Naive thymus-derived CD4-positive, alpha-beta T cell (primary cell): ENCODE measurements at regions of chr6 and their contacts with region 1.

Region 1: DNA sequence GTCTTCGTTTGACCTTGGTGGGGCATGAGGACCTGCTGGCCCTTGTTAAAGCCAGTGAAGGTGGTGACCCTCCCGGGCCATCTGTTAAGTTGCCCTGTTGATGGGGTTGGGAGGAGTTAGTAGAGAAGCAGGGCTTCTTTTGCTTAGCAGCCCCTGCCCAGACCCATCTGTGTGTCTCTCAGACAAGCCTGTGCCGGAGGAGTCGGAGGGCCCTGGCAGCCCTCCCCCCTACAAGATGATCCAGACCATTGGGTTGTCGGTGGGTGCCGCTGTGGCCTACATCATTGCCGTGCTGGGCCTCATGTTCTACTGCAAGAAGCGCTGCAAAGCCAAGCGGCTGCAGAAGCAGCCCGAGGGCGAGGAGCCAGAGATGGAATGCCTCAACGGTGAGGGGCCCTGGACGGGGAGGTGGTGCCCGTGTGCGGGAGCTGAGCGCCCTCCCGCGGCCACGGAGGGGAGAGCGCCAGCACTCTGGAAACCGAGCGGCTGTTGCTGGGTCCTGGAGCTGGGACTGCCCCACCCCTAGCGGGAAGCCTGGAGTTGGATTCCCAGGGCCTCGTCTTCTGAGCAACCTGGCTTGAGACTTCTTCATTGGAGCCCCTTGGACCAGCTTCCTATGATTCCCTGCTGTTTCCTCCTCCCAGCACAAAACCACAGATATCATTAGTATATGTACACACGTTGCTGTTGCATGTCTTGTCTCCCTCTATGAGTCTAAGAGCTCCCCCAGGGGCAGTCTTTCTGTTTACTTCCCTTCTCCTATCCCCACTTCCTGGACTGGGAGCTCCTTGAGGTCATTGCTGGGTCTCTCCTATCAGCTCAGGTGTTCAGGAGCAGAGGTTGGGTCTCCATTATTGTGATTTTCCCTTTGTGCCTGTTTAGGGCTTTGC is 27.6 kb upstream of the SRF start:
- DNase-seq: peak; percentile 62 to 85 (median 76)
- ATAC-seq: peak; percentile 95
- H3K4me3 ChIP-seq: peak overlapping the region; percentile 0
- H3K4me3 Mint-ChIP-seq: peak overlapping the region in 8 of 10 donors; percentile 25 to 63 (median 38)
- H3K27ac ChIP-seq: no peak overlapping the region
- H3K27ac Mint-ChIP-seq: peak overlapping the region in 5 of 9 donors; percentile 30 to 86 (median 51)
- H3K4me1 ChIP-seq: peaks cover 11 to 21% of the 10 kb centered on the region in 2 donors
- H3K4me1 Mint-ChIP-seq: peaks cover 5 to 21% (median 16%) of the 10 kb centered on the region in 7 donors
- H3K27me3 ChIP-seq: no peaks in the 10 kb centered on the region
- H3K27me3 Mint-ChIP-seq: no peaks in the 10 kb centered on the region

Region 2: DNA sequence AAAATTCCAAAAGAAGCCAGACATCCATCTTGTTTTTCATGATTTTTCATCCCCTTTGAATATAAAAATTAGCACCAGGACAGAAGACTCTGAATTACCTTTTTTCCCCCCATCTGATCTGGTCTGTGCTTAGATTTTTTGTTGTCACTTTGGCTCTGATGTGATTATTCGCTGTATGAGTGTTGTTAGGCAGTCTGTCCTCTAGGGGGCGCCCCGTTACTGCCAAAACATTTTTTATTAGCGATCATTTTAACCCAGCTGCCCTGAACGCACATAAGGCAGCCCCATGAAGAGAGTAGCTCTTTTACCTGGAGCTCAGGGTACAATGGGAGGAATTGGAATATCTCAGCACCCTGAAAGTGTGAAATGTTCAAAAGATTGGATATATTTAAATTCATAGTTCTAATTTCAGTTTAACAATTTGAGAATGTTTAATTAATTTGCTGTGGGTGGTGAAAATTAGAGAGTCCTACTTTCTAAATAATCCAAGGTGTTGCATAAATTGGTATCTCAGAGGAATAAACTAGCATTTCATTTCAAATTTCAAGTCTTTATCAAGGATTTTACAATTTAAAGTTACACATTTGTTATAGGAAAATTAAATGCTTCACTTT is 481.8 kb before region 1 on chr6:
- CTCF ChIA-PET with region 1: interaction called, 5 read pairs
- POLR2A ChIA-PET with region 1: interaction called, 3 read pairs
- intact Hi-C with region 1: loop called in 1 of 2 experiments (anchors 2 kb)
- DNase-seq: peak; percentile 73 to 89 (median 81)
- ATAC-seq: peak; percentile 99
- H3K4me3 ChIP-seq: no peak overlapping the region
- H3K4me3 Mint-ChIP-seq: no peak overlapping the region
- H3K27ac ChIP-seq: no peak overlapping the region
- H3K27ac Mint-ChIP-seq: peak overlapping the region in 8 of 9 donors; percentile 0 to 59 (median 26)
- H3K4me1 ChIP-seq: no peaks in the 10 kb centered on the region
- H3K4me1 Mint-ChIP-seq: peaks cover 0 to 6% (median 0%) of the 10 kb centered on the region in 7 donors
- H3K27me3 ChIP-seq: no peaks in the 10 kb centered on the region
- H3K27me3 Mint-ChIP-seq: no peaks in the 10 kb centered on the region

Region 3: DNA sequence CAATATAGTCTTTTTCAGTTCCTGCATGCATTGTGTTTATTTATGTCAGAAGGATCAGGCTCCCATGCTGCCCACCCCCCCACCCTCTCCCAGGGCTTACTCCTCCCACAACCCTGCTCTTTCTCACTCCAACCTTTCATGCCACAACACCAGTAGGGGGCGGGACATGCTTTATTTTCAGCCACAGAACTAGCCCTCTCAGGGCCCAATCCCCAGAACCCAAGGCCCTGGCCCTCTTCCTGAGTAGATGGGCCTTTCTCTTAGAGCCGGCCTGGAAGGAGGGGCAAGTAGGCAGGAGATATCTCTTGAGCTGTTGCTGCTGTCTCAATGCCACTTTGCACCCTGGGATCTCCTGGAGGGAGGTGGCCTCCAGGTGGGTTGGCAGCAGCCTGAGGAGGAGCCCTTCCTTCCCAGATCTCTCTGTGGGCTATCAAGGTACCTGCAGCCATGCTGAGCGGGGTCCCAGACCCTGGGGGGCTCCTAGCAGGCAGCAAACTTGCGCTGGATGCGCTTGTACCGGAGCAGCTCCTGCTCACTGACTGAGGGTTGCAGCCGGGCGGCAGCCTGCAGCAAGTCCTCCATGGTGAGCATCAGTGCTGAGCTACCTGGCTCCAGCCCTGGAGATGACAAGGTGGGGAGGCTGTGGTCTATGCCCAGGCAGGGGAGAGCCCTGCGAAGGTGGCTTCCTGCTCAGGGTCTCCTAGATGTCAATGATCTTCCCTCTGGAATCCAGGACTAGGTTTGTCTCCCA is 179.4 kb before region 1 on chr6:
- CTCF ChIA-PET with region 1: interaction called, 4 read pairs
- POLR2A ChIA-PET with region 1: no interaction called
- intact Hi-C with region 1: loop called (anchors 2 kb)
- DNase-seq: peak in 5 of 9 donors; percentile 14 to 46 (median 23)
- ATAC-seq: peak; percentile 43
- H3K4me3 ChIP-seq: no peak overlapping the region
- H3K4me3 Mint-ChIP-seq: no peak overlapping the region
- H3K27ac ChIP-seq: no peak overlapping the region
- H3K27ac Mint-ChIP-seq: no peak overlapping the region
- H3K4me1 ChIP-seq: peaks cover 0 to 5% of the 10 kb centered on the region in 2 donors
- H3K4me1 Mint-ChIP-seq: peaks cover 0 to 24% (median 16%) of the 10 kb centered on the region in 7 donors
- H3K27me3 ChIP-seq: no peaks in the 10 kb centered on the region
- H3K27me3 Mint-ChIP-seq: peaks cover 0 to 18% (median 0%) of the 10 kb centered on the region in 5 donors

Region 4: GRCh38 chr6:43070028-43070632 is 73.3 kb before region 1 on chr6:
- CTCF ChIA-PET with region 1: no interaction called
- POLR2A ChIA-PET with region 1: no interaction called
- intact Hi-C with region 1: loop called (anchors 1 kb)
- DNase-seq: peak in 6 of 9 donors; percentile 15 to 42 (median 32)
- ATAC-seq: peak; percentile 75
- H3K4me3 ChIP-seq: no peak overlapping the region
- H3K4me3 Mint-ChIP-seq: no peak overlapping the region
- H3K27ac ChIP-seq: no peak overlapping the region
- H3K27ac Mint-ChIP-seq: no peak overlapping the region
- H3K4me1 ChIP-seq: no peaks in the 10 kb centered on the region
- H3K4me1 Mint-ChIP-seq: peaks cover 0 to 5% (median 0%) of the 10 kb centered on the region in 7 donors
- H3K27me3 ChIP-seq: no peaks in the 10 kb centered on the region
- H3K27me3 Mint-ChIP-seq: peaks cover 0 to 3% (median 0%) of the 10 kb centered on the region in 5 donors

Region 5: DNA sequence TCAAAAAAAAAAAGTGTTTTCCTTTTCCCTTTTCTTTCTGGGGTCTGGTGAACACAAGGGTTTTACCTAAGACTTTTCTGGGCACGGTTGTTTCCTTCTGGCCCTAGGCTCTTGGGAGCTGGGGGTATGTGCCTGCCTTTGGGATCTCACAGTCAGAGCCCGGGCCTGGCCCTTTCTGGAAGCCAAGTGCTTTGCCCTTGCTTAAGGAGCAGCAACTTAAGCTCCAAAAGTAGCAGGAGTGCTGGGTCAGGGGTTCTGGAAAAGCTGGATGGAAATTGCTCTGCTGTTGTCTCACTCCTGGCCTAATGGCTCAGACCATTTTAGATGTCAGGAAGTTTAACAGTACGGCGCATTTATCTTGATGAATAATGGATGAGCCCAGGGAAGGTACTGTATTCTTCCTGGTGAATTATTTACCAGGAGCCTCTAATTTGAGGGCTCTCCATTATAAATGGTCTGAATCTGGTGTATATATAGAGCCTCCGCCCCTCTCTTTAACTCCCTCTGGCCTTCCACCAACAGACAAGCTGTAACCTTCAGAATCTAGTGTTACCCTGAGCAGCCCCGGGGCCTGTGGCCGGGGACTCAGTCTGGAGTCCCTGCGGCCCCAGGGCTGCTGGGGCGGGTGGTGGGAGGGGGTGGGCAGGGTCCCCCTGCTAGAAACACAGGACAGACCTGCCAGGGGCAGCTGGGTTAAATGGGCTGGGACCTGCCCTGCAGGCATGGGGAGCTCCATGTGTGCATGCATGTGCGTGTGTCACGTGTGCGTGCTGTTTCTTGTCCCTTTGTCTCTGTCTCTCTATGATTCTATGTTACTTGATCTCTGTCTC is 29.8 kb before region 1 on chr6:
- CTCF ChIA-PET with region 1: no interaction called
- POLR2A ChIA-PET with region 1: no interaction called
- intact Hi-C with region 1: no loop called
- DNase-seq: no peak
- ATAC-seq: no peak
- H3K4me3 ChIP-seq: no peak overlapping the region
- H3K4me3 Mint-ChIP-seq: no peak overlapping the region
- H3K27ac ChIP-seq: no peak overlapping the region
- H3K27ac Mint-ChIP-seq: no peak overlapping the region
- H3K4me1 ChIP-seq: no peaks in the 10 kb centered on the region
- H3K4me1 Mint-ChIP-seq: peaks cover 0 to 2% (median 0%) of the 10 kb centered on the region in 7 donors
- H3K27me3 ChIP-seq: no peaks in the 10 kb centered on the region
- H3K27me3 Mint-ChIP-seq: no peaks in the 10 kb centered on the region